ENCODE measurements at regions of chr21 and their contacts with region 1.

Region 1: GRCh38 chr21:41612674-41613532 is 104.9 kb upstream of the TMPRSS2 start:
- DNase-seq: peak; percentile 58
- H3K4me3 Mint-ChIP-seq: no peak overlapping the region
- H3K27ac Mint-ChIP-seq: no peak overlapping the region
- H3K4me1 Mint-ChIP-seq: no peaks in the 10 kb centered on the region
- H3K27me3 Mint-ChIP-seq: peaks cover 5% of the 10 kb centered on the region

Region 2: DNA sequence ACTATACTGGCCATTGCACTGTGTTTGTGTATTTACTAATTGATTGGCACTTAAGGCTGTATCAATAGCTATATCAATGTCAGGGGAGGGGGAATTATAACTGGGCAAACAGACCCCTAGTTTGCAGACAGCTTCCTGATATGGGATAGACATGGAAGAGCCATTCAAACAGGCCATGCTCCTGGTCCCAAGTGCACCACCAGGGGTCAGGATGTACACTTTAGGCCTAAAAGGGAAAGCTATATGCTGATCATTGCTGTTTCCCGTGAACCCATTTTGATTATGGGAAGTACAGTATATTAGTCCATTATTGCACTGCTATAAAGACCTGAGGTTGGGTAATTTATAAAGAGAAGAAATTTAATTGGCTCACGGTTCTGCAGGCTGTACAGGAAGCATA is 569.9 kb before region 1 on chr21:
- intact Hi-C with region 1: no loop called
- DNase-seq: no peak
- H3K4me3 Mint-ChIP-seq: no peak overlapping the region
- H3K27ac Mint-ChIP-seq: no peak overlapping the region
- H3K4me1 Mint-ChIP-seq: no peaks in the 10 kb centered on the region
- H3K27me3 Mint-ChIP-seq: peaks cover 5% of the 10 kb centered on the region

Region 3: DNA sequence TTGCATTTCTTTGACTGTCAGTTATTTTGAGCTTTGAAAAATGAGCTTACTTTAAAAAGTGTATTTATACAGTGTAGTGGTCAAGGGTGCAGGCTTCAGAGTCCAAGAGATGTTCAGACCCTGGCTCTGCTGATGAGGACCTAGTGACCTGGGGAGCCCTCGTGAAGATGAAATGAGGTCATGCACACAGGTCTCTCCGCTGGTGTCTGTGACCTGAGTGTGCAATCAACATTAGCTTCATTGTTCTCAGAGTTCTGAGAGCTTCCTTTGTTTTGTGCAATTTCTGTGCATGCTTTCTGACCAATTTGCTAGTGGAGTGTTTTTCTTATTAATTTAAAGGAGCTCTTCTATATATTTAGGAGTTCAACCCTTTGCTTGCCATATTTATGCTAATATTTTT is 82.6 kb after region 1 on chr21:
- intact Hi-C with region 1: no loop called
- DNase-seq: no peak
- H3K4me3 Mint-ChIP-seq: no peak overlapping the region
- H3K27ac Mint-ChIP-seq: no peak overlapping the region
- H3K4me1 Mint-ChIP-seq: no peaks in the 10 kb centered on the region
- H3K27me3 Mint-ChIP-seq: no peaks in the 10 kb centered on the region

Region 4: GRCh38 chr21:41777951-41778874 is 165.3 kb after region 1 on chr21:
- intact Hi-C with region 1: loop called (anchors 10 kb)
- DNase-seq: peak; percentile 62
- H3K4me3 Mint-ChIP-seq: no peak overlapping the region
- H3K27ac Mint-ChIP-seq: no peak overlapping the region
- H3K4me1 Mint-ChIP-seq: peaks cover 3% of the 10 kb centered on the region
- H3K27me3 Mint-ChIP-seq: peaks cover 62% of the 10 kb centered on the region

Region 5: DNA sequence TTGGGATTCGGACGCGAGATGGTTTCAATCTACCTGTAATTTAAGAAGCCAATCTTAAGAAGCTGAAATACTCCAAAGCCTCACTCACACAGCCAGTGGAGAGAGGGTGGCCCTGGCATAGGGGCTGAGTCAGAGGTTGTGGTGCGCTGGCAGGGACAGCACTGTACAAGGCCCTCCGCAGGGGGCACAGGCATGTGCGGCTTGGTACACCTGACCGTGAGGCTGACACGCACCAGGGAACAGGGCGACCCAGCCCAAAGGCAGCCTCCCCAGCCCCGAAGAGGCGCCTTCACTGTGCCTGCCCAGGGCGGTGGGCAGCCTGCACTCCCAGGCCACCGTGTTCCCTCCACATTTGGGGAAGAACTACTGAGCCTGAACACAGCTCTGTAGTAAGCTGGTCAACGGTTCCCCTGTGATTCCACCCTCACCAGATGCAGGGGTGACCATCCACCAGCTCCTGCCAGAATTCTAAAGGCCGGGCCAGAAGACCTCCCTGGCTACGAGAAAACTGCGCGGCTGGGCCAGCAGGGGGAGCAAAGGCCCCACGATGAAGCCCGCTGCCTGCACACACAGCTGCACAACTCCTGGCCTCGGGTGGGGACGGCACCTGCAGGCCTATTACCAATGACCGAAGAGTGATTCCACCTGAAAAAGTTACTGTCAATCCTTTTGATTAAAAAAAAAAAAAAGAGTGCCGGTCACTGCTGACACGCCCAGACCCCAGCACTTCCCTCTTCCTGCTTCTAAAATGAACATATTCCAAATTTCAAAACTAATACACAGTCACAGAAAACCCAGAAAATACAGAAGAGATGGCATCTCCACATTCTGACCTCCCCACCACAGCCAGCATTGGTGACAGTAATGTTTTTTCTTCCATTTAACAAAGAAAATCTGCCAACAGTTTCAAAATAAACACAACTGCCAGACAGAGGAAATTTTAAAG is 203.6 kb after region 1 on chr21:
- intact Hi-C with region 1: loop called (anchors 10 kb)
- DNase-seq: peak; percentile 85
- H3K4me3 Mint-ChIP-seq: no peak overlapping the region
- H3K27ac Mint-ChIP-seq: peak overlapping the region; percentile 48
- H3K4me1 Mint-ChIP-seq: peaks cover 5% of the 10 kb centered on the region
- H3K27me3 Mint-ChIP-seq: no peaks in the 10 kb centered on the region

Region 6: DNA sequence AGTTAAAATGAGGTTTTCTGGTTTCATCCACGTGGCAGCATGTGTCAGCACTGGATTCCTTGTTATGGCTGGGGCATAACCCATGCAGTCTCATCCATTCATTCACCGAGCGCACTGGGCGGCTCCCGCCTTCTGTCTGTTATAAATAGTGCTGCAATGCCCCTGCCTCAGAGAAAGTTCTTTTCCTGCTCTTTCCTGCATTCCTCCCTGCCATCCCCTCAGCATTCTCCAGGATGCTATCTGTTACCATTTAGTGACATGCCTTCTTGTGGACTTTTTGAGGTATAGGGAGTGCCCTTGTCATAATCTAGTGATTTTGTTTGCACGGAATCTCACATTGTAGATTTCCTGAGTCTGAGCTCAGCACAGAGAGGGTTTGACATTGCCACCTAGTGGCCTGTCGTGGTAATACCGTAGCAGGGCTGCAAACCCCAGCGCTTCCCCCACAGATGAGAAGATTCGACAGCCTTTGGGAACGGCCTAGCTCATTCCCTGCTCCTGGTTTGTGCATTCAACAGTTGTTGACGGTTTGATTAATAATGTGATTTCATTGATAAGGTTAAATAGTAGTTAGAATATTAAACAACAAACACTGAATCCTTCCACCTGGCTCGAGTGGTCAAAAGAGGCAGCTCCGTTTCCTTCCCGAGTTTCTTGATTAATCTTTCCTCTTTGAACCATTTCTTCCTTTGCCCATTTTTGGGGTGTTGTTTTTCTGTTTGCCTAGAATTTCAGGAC is 504.5 kb after region 1 on chr21:
- intact Hi-C with region 1: loop called (anchors 2 kb)
- DNase-seq: peak; percentile 92
- H3K4me3 Mint-ChIP-seq: no peak overlapping the region
- H3K27ac Mint-ChIP-seq: no peak overlapping the region
- H3K4me1 Mint-ChIP-seq: peaks cover 21% of the 10 kb centered on the region
- H3K27me3 Mint-ChIP-seq: peaks cover 53% of the 10 kb centered on the region

Measured in activated CD4-positive, alpha-beta T cell treated with anti-CD3 and anti-CD28 coated beads, Interleukin-2, amount 10 ng/mL, durations not matched to agents 24 days and 14 days (primary cell).